ENCODE measurements at regions of chr15 and their contacts with region 1.

Region 1: GRCh38 chr15:86624261-86625036 is 544.8 kb downstream of the AGBL1 start:
- DNase-seq: peak; percentile 75 to 82
- H3K4me3 ChIP-seq: no peak overlapping the region
- H3K27ac ChIP-seq: no peak overlapping the region
- H3K4me1 ChIP-seq: no peaks in the 10 kb centered on the region
- H3K27me3 ChIP-seq: no peaks in the 10 kb centered on the region
- CTCF ChIP-seq: peak; percentile 65

Region 2: DNA sequence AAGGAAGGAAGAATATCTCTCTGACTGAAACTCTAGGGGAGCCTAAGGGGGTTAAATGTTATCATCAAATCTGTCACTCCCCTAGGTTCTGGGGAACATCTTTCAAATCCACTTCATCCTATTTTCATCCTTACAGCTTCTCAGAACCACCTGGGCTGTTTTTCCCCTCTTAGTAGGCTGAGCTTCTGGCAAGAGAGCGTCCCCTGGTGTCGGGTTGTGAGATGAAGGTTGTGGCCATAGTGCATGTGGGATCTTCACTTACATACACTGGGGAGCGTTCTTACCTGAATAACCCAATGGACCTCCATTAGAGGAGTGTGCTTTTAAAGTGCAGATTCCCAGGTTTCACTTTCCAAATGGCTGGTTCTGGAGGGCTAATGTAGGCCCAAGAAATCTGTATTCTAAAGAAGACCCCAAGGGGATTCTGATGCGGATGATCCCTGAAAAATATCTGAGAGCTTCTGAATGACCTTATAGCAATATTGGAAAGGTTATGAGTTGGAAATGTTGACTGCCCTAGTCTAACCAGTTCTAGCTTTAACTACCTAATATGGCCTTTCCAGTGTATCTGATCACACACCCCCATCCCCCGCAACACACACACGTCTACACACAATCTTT is 118.9 kb after region 1 on chr15:
- CTCF ChIA-PET with region 1: no interaction called
- POLR2A ChIA-PET with region 1: no interaction called
- intact Hi-C with region 1: loop called (anchors 1 kb)
- DNase-seq: peak in 1 of 2 experiments; percentile 2
- H3K4me3 ChIP-seq: no peak overlapping the region
- H3K27ac ChIP-seq: no peak overlapping the region
- H3K4me1 ChIP-seq: no peaks in the 10 kb centered on the region
- H3K27me3 ChIP-seq: no peaks in the 10 kb centered on the region
- CTCF ChIP-seq: peak; percentile 64

Region 3: GRCh38 chr15:88454867-88455810 is 1830.7 kb after region 1 on chr15:
- CTCF ChIA-PET with region 1: no interaction called
- POLR2A ChIA-PET with region 1: interaction called, 5 read pairs
- intact Hi-C with region 1: loop called (anchors 1 kb)
- DNase-seq: peak; percentile 41 to 51
- H3K4me3 ChIP-seq: no peak overlapping the region
- H3K27ac ChIP-seq: no peak overlapping the region
- H3K4me1 ChIP-seq: no peaks in the 10 kb centered on the region
- H3K27me3 ChIP-seq: no peaks in the 10 kb centered on the region; the same call in 1 of the 2 replicates
- CTCF ChIP-seq: peak; percentile 72